ENCODE measurements at regions of chr12 and their contacts with region 1.

Region 1: DNA sequence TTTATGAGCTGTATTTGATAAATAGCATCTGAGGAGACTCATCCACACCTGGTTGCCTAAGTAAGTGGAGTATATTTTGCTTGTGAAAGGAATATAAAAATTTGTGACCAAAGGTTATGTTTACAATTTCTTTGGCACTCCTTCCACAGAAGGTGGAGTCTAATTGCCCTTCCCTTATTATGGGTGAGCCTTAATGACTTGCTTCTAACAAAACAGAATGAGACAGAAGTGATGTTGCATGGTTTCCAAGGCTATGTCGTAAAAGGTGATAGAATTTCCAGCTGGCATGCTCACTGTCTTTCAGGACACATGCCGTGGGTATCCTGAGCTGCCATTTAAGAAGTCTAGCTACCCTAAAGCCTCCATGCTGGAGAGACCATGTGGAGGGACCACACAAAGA is 116.8 kb upstream of the ABCD2 start:
- H3K4me3 ChIP-seq: no peak overlapping the region
- H3K27ac ChIP-seq: no peak overlapping the region
- H3K4me1 ChIP-seq: no peaks in the 10 kb centered on the region
- CTCF ChIP-seq: no peak

Region 2: DNA sequence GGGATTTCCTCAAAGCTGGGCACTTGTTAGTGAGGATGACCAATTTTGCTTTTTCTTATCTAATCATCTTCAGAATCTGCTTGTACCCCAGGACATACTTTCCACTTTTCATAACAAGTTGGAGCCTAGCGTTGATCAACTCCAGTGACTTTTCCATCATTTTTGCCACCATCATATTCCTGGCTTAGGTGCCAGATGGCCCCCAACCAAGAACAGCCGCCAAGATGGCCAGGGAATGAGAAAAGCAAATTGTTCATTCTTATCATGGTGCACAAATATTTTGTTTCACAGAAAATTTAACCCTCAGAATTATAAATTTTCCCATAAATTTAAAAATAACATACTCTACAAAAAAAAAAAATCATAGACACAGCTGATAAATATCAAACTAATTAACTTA is 332.0 kb after region 1 on chr12:
- CTCF ChIA-PET with region 1: interaction called, 10 read pairs
- POLR2A ChIA-PET with region 1: no interaction called
- H3K4me3 ChIP-seq: no peak overlapping the region
- H3K27ac ChIP-seq: no peak overlapping the region
- H3K4me1 ChIP-seq: no peaks in the 10 kb centered on the region
- CTCF ChIP-seq: no peak

Measured in HEK293 (cell line).